ENCODE measurements at regions of chr20 and their contacts with region 1.

Region 1: GRCh38 chr20:62121776-62122631 is at the start of gene LSM14B:
- DNase-seq: peak; percentile 94 to 98
- ATAC-seq: peak; percentile 78 to 90 (median 78)
- H3K4me3 ChIP-seq: peak within 1 kb of the TSS; percentile 49
- H3K4me3 Mint-ChIP-seq: peak within 1 kb of the TSS; percentile 83
- H3K27ac ChIP-seq: peak within 1 kb of the TSS; percentile 77
- H3K27ac Mint-ChIP-seq: peak within 1 kb of the TSS; percentile 81 to 86
- H3K4me1 ChIP-seq: peaks cover 47% of the 10 kb centered on the region
- H3K4me1 Mint-ChIP-seq: peaks cover 21 to 43% of the 10 kb centered on the region in 2 donors
- H3K27me3 ChIP-seq: no peaks in the 10 kb centered on the region
- H3K27me3 Mint-ChIP-seq: peaks cover 0 to 2% of the 10 kb centered on the region in 2 donors
- CTCF ChIP-seq: no peak
- total RNA-seq, gene LSM14B: 41.1 to 56.2 (median 47.3) TPM

Region 2: GRCh38 chr20:61980700-61981583 is 141.1 kb before region 1 on chr20:
- intact Hi-C with region 1: no loop called
- DNase-seq: peak in 1 of 2 donors; percentile 20
- ATAC-seq: peak in 2 of 3 donors; percentile 46 to 56
- H3K4me3 ChIP-seq: no peak overlapping the region
- H3K4me3 Mint-ChIP-seq: peak overlapping the region; percentile 55
- H3K27ac ChIP-seq: peak overlapping the region; percentile 46
- H3K27ac Mint-ChIP-seq: peak overlapping the region; percentile 77 to 79
- H3K4me1 ChIP-seq: peaks cover 42% of the 10 kb centered on the region
- H3K4me1 Mint-ChIP-seq: peaks cover 37 to 51% of the 10 kb centered on the region in 2 donors
- H3K27me3 ChIP-seq: no peaks in the 10 kb centered on the region
- H3K27me3 Mint-ChIP-seq: no peaks in the 10 kb centered on the region
- CTCF ChIP-seq: no peak

Region 3: DNA sequence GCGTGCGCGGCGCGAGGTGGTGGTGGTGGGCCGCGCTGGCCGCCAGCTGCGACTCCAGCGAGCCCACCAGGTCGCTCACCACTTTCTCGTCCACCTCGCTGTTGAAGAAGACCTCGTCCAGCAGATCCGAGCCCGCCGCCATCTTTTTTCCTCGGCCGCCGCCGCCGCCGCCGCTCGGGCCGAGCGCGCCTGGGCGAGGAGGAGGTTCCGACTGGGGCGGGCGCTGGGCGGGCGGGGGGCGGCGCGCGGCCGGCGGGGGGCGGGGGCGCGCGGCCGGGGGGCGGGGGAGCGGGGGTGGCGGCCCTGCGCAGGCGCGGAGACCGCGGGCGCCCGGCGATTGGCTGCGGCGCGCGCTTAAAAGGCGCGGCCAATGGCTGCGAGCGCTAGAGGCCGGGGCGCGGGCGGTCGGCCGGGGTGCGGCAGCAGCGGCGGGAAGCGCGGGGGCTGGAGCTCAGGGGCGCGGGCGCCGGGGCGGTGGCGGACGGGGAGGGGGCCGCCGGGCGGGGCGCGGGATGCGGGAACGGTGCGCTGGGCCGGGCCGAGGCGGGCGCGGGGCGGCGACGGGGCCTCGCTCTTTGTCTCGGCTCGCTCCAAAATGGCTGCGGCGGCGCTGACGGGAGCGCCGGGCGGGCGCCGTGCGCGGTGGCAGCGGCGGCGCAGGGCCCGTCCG is 56.2 kb before region 1 on chr20 and contains the start of gene TAF4:
- intact Hi-C with region 1: loop called (anchors 2 kb)
- DNase-seq: peak; percentile 81 to 93
- ATAC-seq: peak; percentile 82 to 90 (median 83)
- H3K4me3 ChIP-seq: peak within 1 kb of the TSS; percentile 61
- H3K4me3 Mint-ChIP-seq: peak within 1 kb of the TSS; percentile 94
- H3K27ac ChIP-seq: peak within 1 kb of the TSS; percentile 67
- H3K27ac Mint-ChIP-seq: peak within 1 kb of the TSS; percentile 87 to 88
- H3K4me1 ChIP-seq: peaks cover 38% of the 10 kb centered on the region
- H3K4me1 Mint-ChIP-seq: peaks cover 31 to 42% of the 10 kb centered on the region in 2 donors
- H3K27me3 ChIP-seq: peaks cover 2% of the 10 kb centered on the region
- H3K27me3 Mint-ChIP-seq: peaks cover 6% of the 10 kb centered on the region in 2 donors
- CTCF ChIP-seq: no peak
- total RNA-seq, gene TAF4: 30.0 to 35.1 (median 30.3) TPM

Region 4: DNA sequence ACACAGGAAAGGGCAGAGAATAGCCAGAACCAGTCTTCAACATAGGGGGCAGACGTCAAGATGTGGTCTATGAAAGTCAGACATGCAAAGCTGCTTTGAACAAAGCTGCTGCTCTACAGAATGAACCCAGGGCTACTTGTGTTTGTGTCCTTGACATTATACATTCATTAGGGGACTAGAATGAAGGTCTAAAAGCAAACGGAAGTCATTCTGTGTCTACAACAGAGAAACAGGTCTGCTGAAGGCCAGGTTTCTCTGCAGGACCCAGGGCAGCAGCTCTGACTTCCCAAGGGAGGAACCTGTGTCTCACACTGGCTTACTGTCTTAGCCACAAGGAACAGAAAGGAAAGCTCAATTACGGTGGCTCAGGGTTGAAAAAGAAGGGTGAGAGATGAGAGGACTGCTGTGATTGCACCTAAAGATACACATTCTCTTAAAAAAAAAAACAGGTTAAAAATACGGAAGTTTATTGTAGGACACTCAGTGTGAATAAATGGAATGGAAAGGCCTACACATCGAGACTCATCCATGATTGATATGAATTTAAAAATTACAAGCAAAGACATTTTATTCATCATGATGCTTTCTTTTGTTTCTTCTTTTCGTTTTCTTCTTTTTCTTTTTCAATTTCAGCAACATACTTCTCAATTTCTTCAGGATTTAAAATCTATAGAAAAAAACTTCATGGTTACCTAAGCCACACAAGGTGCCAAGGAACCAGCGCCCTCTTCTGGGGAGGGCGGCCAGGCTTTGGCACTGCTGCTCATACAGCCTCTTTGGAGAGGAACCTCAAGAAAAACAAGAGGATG is 14.5 kb after region 1 on chr20:
- intact Hi-C with region 1: loop called (anchors 2 kb)
- DNase-seq: peak; percentile 58 to 88
- ATAC-seq: peak; percentile 58 to 73 (median 60)
- H3K4me3 ChIP-seq: no peak overlapping the region
- H3K4me3 Mint-ChIP-seq: no peak overlapping the region
- H3K27ac ChIP-seq: no peak overlapping the region
- H3K27ac Mint-ChIP-seq: peak overlapping the region; percentile 51 to 76
- H3K4me1 ChIP-seq: peaks cover 21% of the 10 kb centered on the region
- H3K4me1 Mint-ChIP-seq: peaks cover 44 to 50% of the 10 kb centered on the region in 2 donors
- H3K27me3 ChIP-seq: no peaks in the 10 kb centered on the region
- H3K27me3 Mint-ChIP-seq: no peaks in the 10 kb centered on the region
- CTCF ChIP-seq: peak; percentile 73

Region 5: DNA sequence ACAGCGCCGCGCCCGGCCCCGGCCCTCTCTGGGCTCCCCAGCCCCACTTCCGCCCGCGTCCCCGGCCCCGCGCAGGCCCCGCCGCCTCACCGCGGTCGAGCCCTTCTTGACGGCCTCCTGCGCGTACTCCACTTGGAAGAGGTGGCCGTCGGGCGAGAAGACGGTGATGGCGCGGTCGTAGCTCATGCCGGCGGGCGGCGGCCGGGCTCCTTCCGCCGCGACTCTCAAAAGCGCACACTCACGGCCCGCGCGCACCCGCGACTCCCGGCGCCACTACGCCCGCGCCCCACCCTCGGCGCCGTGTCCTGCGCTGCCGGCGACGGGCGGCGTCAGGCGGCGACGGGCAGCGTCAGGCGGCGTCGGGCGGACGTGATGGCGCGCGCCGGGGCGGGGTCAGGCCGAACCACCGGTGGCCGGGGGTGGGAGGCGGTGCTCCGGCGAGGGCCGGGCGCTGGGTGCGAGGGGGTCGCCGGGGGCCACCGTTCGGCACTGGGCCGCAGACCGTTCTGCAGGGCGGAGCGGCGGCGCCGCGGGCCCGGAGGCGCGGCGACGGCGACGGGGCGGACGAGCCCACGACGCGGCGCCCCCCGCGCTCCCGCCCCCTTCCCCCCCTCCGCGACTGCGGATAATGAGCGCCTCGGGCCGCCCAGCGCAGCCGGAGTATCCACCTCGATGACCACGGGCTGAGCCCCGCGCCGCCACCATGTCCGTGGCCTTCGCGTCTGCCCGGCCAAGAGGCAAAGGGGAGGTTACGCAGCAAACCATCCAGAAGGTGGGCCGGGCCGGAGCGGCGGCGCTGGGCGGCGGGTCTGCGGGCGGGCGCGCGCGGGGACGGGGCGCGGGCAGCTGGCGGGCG is 21.3 kb after region 1 on chr20 and contains the starts of genes PSMA7 and SS18L1:
- intact Hi-C with region 1: loop called (anchors 1 kb)
- DNase-seq: peak; percentile 86 to 95
- ATAC-seq: peak; percentile 87 to 95 (median 88)
- H3K4me3 ChIP-seq: peak within 1 kb of the TSS; percentile 55
- H3K4me3 Mint-ChIP-seq: peak within 1 kb of the TSS; percentile 91
- H3K27ac ChIP-seq: peak within 1 kb of the TSS; percentile 75
- H3K27ac Mint-ChIP-seq: peak within 1 kb of the TSS; percentile 79 to 90
- H3K4me1 ChIP-seq: peaks cover 30% of the 10 kb centered on the region
- H3K4me1 Mint-ChIP-seq: peaks cover 44 to 54% of the 10 kb centered on the region in 2 donors
- H3K27me3 ChIP-seq: no peaks in the 10 kb centered on the region
- H3K27me3 Mint-ChIP-seq: no peaks in the 10 kb centered on the region
- CTCF ChIP-seq: no peak
- total RNA-seq, gene PSMA7: 154 to 177 (median 168) TPM
- total RNA-seq, gene SS18L1: 19.1 to 26.0 (median 23.7) TPM

Measured in natural killer cell (primary cell).